CD8-positive, alpha-beta memory T cell (primary cell): ENCODE measurements at regions of chr22 and their contacts with region 1.

Region 1: GRCh38 chr22:18152519-18152918 is 2.5 kb downstream of the USP18 start:
- DNase-seq: peak in 1 of 5 donors; percentile 51
- H3K4me3 ChIP-seq: no peak overlapping the region
- H3K4me3 Mint-ChIP-seq: peak overlapping the region; percentile 56 to 95 (median 74)
- H3K27ac ChIP-seq: no peak overlapping the region
- H3K27ac Mint-ChIP-seq: peak overlapping the region in 6 of 8 donors; percentile 9 to 92 (median 82)
- H3K4me1 ChIP-seq: peaks cover 31% of the 10 kb centered on the region
- H3K4me1 Mint-ChIP-seq: peaks cover 36 to 45% (median 42%) of the 10 kb centered on the region in 3 donors
- H3K27me3 ChIP-seq: no peaks in the 10 kb centered on the region
- H3K27me3 Mint-ChIP-seq: no peaks in the 10 kb centered on the region

Region 2: GRCh38 chr22:17945888-17946648 is 206.5 kb before region 1 on chr22:
- CTCF ChIA-PET with region 1: no interaction called
- POLR2A ChIA-PET with region 1: no interaction called
- DNase-seq: no peak
- H3K4me3 ChIP-seq: no peak overlapping the region
- H3K4me3 Mint-ChIP-seq: no peak overlapping the region
- H3K27ac ChIP-seq: no peak overlapping the region
- H3K27ac Mint-ChIP-seq: no peak overlapping the region
- H3K4me1 ChIP-seq: no peaks in the 10 kb centered on the region
- H3K4me1 Mint-ChIP-seq: peaks cover 6 to 69% (median 31%) of the 10 kb centered on the region in 3 donors
- H3K27me3 ChIP-seq: no peaks in the 10 kb centered on the region
- H3K27me3 Mint-ChIP-seq: no peaks in the 10 kb centered on the region

Region 3: DNA sequence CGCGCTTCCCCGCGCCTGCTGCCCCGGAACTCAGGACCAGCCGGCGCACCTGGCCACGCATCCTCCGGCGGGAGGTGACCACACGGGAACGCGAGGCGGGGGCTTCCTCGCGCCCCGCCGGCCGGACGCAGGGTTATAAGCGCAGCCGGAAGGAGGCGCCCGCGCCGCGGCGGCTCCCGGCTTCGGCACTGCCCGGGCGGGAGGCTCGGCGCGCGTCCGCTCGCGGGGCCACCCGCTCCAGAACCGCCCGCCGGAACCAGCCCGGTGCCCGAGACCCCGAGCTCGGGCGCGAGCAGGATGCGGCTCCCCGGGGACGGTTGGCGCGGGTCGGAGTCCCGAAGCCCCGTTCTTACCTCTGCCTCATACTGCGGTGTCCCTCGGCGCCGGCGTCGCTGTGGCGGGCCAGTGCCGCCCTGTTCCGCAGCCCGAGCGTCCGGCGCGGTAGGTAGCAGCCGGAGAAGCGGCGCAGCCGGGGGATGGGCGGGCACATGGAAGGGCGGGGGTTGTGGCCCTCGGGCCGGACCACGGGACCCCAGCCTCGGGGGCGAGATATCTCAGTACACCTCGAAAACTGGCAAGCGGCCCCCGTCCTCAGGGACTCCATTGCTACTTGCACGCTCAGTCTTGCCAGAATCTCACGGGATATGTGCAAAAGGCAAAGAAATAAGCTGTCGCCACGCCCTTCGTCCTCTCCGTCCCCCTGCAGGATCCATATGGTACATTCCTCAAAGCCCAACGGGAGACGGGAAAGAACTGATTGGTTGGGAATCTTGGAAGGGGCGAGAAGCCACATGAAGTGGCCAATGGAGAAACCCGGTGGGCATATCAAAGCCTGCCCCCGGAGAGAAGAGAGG is 151.3 kb before region 1 on chr22:
- CTCF ChIA-PET with region 1: no interaction called
- POLR2A ChIA-PET with region 1: no interaction called
- DNase-seq: peak; percentile 41 to 83 (median 62)
- H3K4me3 ChIP-seq: peak overlapping the region; percentile 92
- H3K4me3 Mint-ChIP-seq: peak overlapping the region; percentile 92 to 97 (median 96)
- H3K27ac ChIP-seq: peak overlapping the region; percentile 91
- H3K27ac Mint-ChIP-seq: peak overlapping the region; percentile 60 to 97 (median 96)
- H3K4me1 ChIP-seq: peaks cover 29% of the 10 kb centered on the region
- H3K4me1 Mint-ChIP-seq: peaks cover 37 to 58% (median 52%) of the 10 kb centered on the region in 3 donors
- H3K27me3 ChIP-seq: no peaks in the 10 kb centered on the region
- H3K27me3 Mint-ChIP-seq: peaks cover 2 to 7% of the 10 kb centered on the region in 2 donors

Region 4: GRCh38 chr22:18048066-18048898 is 104.2 kb before region 1 on chr22:
- CTCF ChIA-PET with region 1: no interaction called
- POLR2A ChIA-PET with region 1: no interaction called
- DNase-seq: no peak
- H3K4me3 ChIP-seq: no peak overlapping the region
- H3K4me3 Mint-ChIP-seq: no peak overlapping the region
- H3K27ac ChIP-seq: no peak overlapping the region
- H3K27ac Mint-ChIP-seq: no peak overlapping the region
- H3K4me1 ChIP-seq: no peaks in the 10 kb centered on the region
- H3K4me1 Mint-ChIP-seq: no peaks in the 10 kb centered on the region
- H3K27me3 ChIP-seq: peaks cover 3% of the 10 kb centered on the region
- H3K27me3 Mint-ChIP-seq: peaks cover 6 to 19% of the 10 kb centered on the region in 2 donors

Region 5: DNA sequence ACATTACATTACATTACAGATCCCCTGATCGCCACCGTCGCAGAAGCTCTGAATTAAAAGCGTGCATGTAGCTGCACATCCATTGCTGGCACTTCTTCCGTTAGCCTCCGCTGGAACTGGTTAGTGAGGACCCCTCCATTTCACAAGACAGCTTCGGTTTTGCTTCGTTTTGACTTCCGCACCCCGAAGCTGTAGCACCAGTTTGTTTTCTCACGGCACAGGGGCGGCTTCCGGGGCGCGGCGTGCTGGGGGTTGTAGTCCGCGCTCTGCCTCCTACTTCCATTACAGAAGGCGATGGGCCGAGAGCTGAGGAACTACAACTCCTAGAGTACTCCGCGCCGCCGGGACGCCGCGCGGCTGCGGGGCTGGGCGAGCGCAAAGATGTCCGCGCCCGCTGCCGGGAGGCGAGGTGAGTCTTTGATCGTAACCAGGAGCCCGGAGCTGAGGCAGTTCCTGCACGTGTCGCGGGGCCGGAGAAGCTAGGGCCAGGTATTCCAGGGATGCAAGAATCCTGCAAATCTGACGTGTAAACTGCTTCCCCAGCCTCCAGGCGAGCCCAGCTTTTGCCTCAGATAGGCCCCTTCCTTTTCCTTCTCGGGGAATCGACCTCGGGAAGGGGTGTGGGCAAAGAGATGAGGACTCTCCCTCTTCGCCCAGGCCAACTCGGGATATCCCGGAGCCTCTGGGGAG is 74.7 kb before region 1 on chr22 and contains the start of gene PEX26:
- CTCF ChIA-PET with region 1: interaction called, 4 read pairs
- POLR2A ChIA-PET with region 1: interaction called, 24 read pairs
- DNase-seq: peak; percentile 91 to 96 (median 93)
- H3K4me3 ChIP-seq: peak within 1 kb of the TSS; percentile 93
- H3K4me3 Mint-ChIP-seq: peak within 1 kb of the TSS; percentile 91 to 99 (median 95)
- H3K27ac ChIP-seq: peak within 1 kb of the TSS; percentile 84
- H3K27ac Mint-ChIP-seq: peak within 1 kb of the TSS; percentile 92 to 100 (median 97)
- H3K4me1 ChIP-seq: peaks cover 37% of the 10 kb centered on the region
- H3K4me1 Mint-ChIP-seq: peaks cover 54 to 63% (median 62%) of the 10 kb centered on the region in 3 donors
- H3K27me3 ChIP-seq: no peaks in the 10 kb centered on the region
- H3K27me3 Mint-ChIP-seq: no peaks in the 10 kb centered on the region
- total RNA-seq, gene PEX26: 56.7 to 59.3 TPM